ENCODE measurements at regions of chr3 and their contacts with region 1.

Region 1: GRCh38 chr3:71725279-71725991 is at the start of gene EIF4E3:
- DNase-seq: peak; percentile 28
- H3K4me3 Mint-ChIP-seq: peak within 1 kb of the TSS; percentile 88
- H3K27ac Mint-ChIP-seq: peak within 1 kb of the TSS; percentile 89
- H3K4me1 Mint-ChIP-seq: peaks cover 63% of the 10 kb centered on the region
- H3K27me3 Mint-ChIP-seq: peaks cover 2% of the 10 kb centered on the region
- total RNA-seq, gene EIF4E3: 17.3 and 17.9 TPM in 2 replicates

Region 2: GRCh38 chr3:71444028-71444860 is 281.2 kb before region 1 on chr3:
- intact Hi-C with region 1: loop called (anchors 5 kb)
- DNase-seq: peak; percentile 79
- H3K4me3 Mint-ChIP-seq: peak overlapping the region; percentile 71
- H3K27ac Mint-ChIP-seq: peak overlapping the region; percentile 99
- H3K4me1 Mint-ChIP-seq: peaks cover 86% of the 10 kb centered on the region
- H3K27me3 Mint-ChIP-seq: no peaks in the 10 kb centered on the region

Region 3: GRCh38 chr3:71710906-71711494 is 14.4 kb before region 1 on chr3:
- intact Hi-C with region 1: loop called (anchors 1 kb)
- DNase-seq: no peak
- H3K4me3 Mint-ChIP-seq: no peak overlapping the region
- H3K27ac Mint-ChIP-seq: no peak overlapping the region
- H3K4me1 Mint-ChIP-seq: peaks cover 40% of the 10 kb centered on the region
- H3K27me3 Mint-ChIP-seq: no peaks in the 10 kb centered on the region

Region 4: DNA sequence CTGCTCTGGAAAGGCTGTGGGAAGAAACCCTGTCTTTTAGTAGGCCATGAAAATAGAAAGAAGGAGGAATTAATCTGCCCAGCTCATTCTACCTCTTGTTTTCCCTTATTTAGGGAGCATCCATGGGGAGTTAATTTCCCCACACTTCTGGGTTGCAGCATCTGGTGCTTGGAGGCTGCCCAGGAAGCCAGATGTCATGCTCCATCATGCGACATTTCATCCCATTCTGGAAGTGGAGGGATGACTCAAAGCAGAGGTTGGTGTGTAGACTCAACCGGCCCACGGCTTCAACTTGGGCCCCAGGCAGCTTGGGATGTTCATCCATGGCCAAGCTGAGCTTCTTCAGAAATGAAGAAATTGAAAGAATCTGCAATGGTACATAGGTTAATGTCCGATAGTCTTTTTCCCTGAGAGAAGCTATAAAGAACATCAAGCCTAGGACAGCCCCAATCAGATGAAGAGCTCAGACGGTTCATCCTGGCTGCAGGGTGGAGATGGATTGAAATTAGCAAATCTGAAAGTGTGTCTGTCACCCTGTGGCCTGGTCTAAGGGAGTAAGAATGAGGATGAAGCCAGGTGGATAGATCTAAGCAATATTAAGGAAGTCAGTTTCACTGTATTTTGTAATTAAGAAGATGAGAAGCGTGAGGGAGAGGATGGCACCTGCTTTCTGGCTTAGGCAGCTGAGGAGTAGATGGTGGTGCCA is 84.0 kb after region 1 on chr3:
- intact Hi-C with region 1: no loop called
- DNase-seq: no peak
- H3K4me3 Mint-ChIP-seq: no peak overlapping the region
- H3K27ac Mint-ChIP-seq: no peak overlapping the region
- H3K4me1 Mint-ChIP-seq: no peaks in the 10 kb centered on the region
- H3K27me3 Mint-ChIP-seq: peaks cover 12% of the 10 kb centered on the region

Region 5: DNA sequence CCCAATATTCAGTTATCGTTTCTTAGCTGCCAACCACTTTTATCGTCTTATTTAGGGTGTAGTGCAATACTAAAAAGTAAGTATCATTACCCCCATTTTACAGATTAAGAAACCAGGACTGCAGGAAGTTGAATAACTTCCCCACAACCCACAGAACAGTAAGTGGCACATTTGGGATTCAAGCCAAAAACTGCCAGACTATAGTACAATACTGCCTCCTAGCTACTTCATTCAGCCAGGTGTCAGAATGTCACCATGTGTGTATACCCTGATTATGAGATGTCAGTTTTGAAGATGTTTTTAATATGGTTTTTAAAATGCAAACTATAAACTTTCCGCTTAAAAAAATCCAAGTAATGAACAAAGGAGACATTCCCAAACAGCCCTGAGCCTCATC is 133.7 kb after region 1 on chr3:
- intact Hi-C with region 1: loop called (anchors 2 kb)
- DNase-seq: no peak
- H3K4me3 Mint-ChIP-seq: no peak overlapping the region
- H3K27ac Mint-ChIP-seq: no peak overlapping the region
- H3K4me1 Mint-ChIP-seq: peaks cover 5% of the 10 kb centered on the region
- H3K27me3 Mint-ChIP-seq: peaks cover 25% of the 10 kb centered on the region

Region 6: GRCh38 chr3:72274493-72275330 is 549.3 kb after region 1 on chr3:
- intact Hi-C with region 1: no loop called
- DNase-seq: peak; percentile 19
- H3K4me3 Mint-ChIP-seq: no peak overlapping the region
- H3K27ac Mint-ChIP-seq: no peak overlapping the region
- H3K4me1 Mint-ChIP-seq: peaks cover 22% of the 10 kb centered on the region
- H3K27me3 Mint-ChIP-seq: peaks cover 13% of the 10 kb centered on the region

Region 7: DNA sequence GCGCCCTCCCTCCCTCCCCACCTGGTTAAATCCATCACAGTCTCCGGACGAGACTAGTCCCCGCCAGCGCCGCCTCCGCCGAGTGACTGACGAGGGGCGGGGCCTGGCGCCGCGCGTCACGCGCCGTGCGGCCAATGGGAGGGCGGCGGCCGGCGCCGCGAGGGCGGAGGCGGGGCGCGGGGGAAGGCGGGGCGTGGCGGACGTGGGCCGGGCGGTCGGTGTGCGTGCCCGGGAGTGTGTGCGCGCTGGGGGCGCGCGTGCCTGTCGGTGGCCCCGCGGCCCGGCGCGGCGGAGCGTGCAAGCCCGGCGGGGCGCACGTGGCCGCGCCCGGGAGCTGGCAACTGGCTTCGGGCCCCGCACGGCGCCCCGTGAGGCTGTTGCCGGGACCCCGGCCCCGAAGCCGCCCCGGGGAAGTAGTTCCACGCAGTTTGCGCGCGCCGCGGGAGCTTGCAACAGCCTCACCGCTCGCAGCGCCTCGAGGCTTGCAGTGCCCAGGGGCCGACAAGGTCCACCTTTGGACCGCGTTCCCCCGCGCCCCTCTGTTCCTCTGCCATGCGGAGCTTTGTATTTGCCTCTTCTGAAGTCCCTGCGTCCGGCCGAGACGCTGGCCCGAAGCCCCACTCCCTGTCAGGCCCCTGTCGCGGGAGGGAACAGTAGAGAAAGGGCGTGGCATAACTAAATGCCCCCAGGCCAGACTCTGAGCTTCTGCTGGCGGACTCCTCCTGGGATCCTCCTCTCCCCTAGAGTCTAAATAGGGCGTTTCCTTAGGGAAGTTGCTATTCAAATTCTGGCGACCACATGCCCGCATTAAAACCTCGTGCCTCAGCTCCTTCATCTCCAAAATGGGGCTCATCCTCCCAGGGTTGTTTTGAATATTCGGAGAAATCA is 721.9 kb after region 1 on chr3:
- intact Hi-C with region 1: loop called (anchors 1 kb)
- DNase-seq: peak; percentile 92
- H3K4me3 Mint-ChIP-seq: peak overlapping the region; percentile 66
- H3K27ac Mint-ChIP-seq: peak overlapping the region; percentile 60
- H3K4me1 Mint-ChIP-seq: peaks cover 52% of the 10 kb centered on the region
- H3K27me3 Mint-ChIP-seq: no peaks in the 10 kb centered on the region

Region 8: GRCh38 chr3:72847751-72848702 is 1122.6 kb after region 1 on chr3 and contains the start of gene SHQ1:
- intact Hi-C with region 1: loop called (anchors 5 kb)
- DNase-seq: peak; percentile 91
- H3K4me3 Mint-ChIP-seq: peak within 1 kb of the TSS; percentile 99
- H3K27ac Mint-ChIP-seq: peak within 1 kb of the TSS; percentile 77
- H3K4me1 Mint-ChIP-seq: peaks cover 54% of the 10 kb centered on the region
- H3K27me3 Mint-ChIP-seq: no peaks in the 10 kb centered on the region
- total RNA-seq, gene SHQ1: 29.0 and 31.2 TPM in 2 replicates

Measured in activated T-helper 2 cell treated with anti-CD3 and anti-CD28 coated beads, Interferon-gamma antibody, Interleukin-2, Interleukin-4, amounts not matched to agents 10 μg/mL and 5 μg/mL and 100 μg/mL, durations not matched to agents 14 hours and 24 hours and 36 hours (primary cell).